ENCODE measurements at regions of chr9 and their contacts with region 1.

Region 1: GRCh38 chr9:114906908-114907571 is 23.4 kb downstream of the TNFSF8 start:
- DNase-seq: no peak
- H3K4me3 ChIP-seq: no peak overlapping the region
- H3K27ac ChIP-seq: no peak overlapping the region; the same call in 1 of the 2 replicates
- H3K4me1 ChIP-seq: peaks cover 26% of the 10 kb centered on the region
- H3K27me3 ChIP-seq: peaks cover 11% of the 10 kb centered on the region
- CTCF ChIP-seq: peak; percentile 68

Region 2: GRCh38 chr9:114405294-114406034 is 501.6 kb before region 1 on chr9:
- CTCF ChIA-PET with region 1: interaction called, 4 read pairs
- POLR2A ChIA-PET with region 1: no interaction called
- intact Hi-C with region 1: loop called (anchors 2 kb)
- DNase-seq: peak; percentile 59 to 76
- H3K4me3 ChIP-seq: no peak overlapping the region
- H3K27ac ChIP-seq: no peak overlapping the region
- H3K4me1 ChIP-seq: no peaks in the 10 kb centered on the region
- H3K27me3 ChIP-seq: no peaks in the 10 kb centered on the region
- CTCF ChIP-seq: peak; percentile 82

Region 3: DNA sequence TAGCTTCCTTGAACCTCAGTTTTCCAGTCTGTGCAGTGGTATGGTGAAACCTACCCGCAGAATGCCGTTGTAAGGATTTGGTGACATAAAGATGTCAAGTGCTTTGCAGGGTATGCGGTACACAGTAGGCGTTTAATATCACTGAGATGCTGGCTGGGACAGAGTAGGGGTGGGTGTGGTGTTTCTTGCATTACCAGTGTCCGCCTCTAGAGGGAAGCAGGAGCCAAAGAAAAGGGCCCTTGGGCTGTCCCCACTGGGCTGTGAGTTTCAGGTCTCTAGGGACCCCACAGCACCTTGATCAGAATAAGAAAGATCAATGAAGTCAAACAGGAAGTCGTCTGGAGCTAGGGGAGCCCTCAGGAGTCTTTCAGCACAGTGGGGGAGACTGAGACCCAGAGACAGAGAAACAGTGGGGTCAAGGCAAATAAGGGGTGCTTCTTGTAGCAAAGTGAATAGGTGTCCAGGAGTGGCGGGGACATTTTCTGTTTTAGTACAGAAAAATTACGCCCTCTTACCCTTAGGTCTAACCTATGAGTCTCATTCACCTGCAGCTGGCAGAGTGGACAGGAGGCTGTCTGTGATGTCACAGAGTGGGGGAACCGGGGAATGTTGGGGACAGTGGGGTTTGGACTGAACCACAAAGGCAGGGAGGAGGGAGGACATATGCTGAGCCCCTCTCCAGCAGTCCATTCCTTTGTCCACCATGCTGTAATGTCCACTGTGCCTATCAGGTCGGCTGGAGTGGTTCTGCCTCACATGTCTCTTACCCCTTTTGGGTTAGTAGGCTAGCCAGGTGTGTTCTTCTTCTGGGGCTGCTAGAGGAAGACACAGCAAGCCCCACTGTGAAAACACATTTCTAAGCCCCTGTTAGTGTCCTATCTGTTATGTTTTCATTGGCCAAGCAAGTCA is 244.7 kb before region 1 on chr9:
- CTCF ChIA-PET with region 1: no interaction called
- POLR2A ChIA-PET with region 1: no interaction called
- intact Hi-C with region 1: loop called (anchors 1 kb)
- DNase-seq: peak in 1 of 2 experiments; percentile 58
- H3K4me3 ChIP-seq: no peak overlapping the region
- H3K27ac ChIP-seq: no peak overlapping the region
- H3K4me1 ChIP-seq: no peaks in the 10 kb centered on the region
- H3K27me3 ChIP-seq: no peaks in the 10 kb centered on the region
- CTCF ChIP-seq: peak; percentile 96

Region 4: DNA sequence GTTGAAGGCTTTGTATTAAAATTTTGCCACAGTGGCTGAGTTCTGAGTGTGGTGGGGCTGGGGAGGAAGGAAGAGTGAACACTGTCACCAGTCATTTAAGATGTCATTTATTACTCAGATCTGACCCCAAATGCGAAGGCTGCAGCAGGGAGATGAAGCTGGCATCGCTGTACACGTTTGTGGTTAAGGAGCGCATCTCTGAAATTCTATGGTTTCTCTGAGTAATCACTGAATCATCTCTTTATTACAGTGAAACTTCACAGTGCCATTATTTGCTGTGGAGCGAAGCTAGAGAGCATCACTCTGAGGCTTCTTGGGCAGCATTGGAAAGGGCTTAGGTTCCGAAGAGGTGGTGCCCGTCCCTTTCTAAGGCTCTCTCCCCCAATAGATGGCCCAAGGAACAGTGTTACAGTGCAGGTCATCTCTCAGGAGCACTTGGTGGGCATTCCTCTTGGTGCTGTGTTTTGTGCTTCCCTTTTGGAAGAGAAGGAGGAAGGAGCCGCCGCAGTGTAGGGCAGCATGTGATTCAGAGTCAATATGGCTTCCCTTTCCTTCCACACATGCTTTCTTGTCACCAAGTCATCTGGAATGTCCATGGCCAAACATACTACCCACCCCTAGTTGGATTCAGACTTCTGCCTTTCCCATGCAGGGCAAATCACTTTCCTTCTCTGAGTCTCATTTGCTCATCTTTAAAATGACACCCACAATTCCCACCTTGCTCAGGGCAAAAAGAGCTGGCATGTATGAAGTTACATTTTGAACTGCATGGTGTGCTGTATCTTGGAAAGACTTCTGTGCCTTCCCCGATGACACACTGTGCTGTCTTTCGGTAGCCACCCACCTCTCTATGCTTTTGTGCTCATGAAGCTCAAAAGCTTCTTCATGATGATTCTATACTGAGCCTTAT is 215.7 kb before region 1 on chr9:
- CTCF ChIA-PET with region 1: interaction called, 3 read pairs
- POLR2A ChIA-PET with region 1: no interaction called
- intact Hi-C with region 1: loop called (anchors 1 kb)
- DNase-seq: peak; percentile 69 to 95
- H3K4me3 ChIP-seq: no peak overlapping the region
- H3K27ac ChIP-seq: peak overlapping the region; percentile 79
- H3K4me1 ChIP-seq: peaks cover 35% of the 10 kb centered on the region
- H3K27me3 ChIP-seq: no peaks in the 10 kb centered on the region
- CTCF ChIP-seq: no peak

Region 5: GRCh38 chr9:114738581-114739316 is 168.3 kb before region 1 on chr9:
- CTCF ChIA-PET with region 1: interaction called, 5 read pairs
- POLR2A ChIA-PET with region 1: no interaction called
- intact Hi-C with region 1: loop called (anchors 1 kb)
- DNase-seq: peak; percentile 68 to 69
- H3K4me3 ChIP-seq: no peak overlapping the region
- H3K27ac ChIP-seq: no peak overlapping the region
- H3K4me1 ChIP-seq: peaks cover 19% of the 10 kb centered on the region
- H3K27me3 ChIP-seq: no peaks in the 10 kb centered on the region
- CTCF ChIP-seq: peak; percentile 92

Region 6: GRCh38 chr9:114779352-114779845 is 127.6 kb before region 1 on chr9:
- CTCF ChIA-PET with region 1: no interaction called
- POLR2A ChIA-PET with region 1: no interaction called
- intact Hi-C with region 1: no loop called
- DNase-seq: peak; percentile 85 to 94
- H3K4me3 ChIP-seq: no peak overlapping the region
- H3K27ac ChIP-seq: no peak overlapping the region
- H3K4me1 ChIP-seq: peaks cover 19% of the 10 kb centered on the region
- H3K27me3 ChIP-seq: 0 out of 2 replicates have a peak, but pooled peaks cover 10% of the 10 kb centered on the region
- CTCF ChIP-seq: no peak

Region 7: DNA sequence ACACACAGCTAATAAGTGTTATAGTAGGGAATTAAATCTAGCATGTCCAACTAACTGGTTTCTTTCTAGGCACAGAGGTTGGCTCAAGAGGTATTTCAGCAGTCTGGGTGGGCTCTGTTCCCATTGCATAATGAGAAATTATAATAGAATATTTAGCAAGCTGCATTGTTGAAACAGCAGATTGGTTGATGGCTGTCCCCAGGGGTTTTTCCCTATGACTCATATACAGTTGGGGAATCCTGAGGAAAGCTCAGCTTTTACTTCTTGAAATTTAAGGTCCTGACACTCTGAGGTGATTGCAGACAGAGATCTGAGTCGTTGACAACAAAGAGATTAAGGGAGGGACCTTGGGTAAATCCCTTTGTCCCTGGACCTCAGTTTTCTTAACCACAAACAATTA is 61.6 kb after region 1 on chr9:
- CTCF ChIA-PET with region 1: no interaction called
- POLR2A ChIA-PET with region 1: no interaction called
- intact Hi-C with region 1: no loop called
- DNase-seq: no peak
- H3K4me3 ChIP-seq: no peak overlapping the region
- H3K27ac ChIP-seq: no peak overlapping the region
- H3K4me1 ChIP-seq: no peaks in the 10 kb centered on the region
- H3K27me3 ChIP-seq: peaks cover 4% of the 10 kb centered on the region; the same call in 1 of the 2 replicates
- CTCF ChIP-seq: no peak

Region 8: DNA sequence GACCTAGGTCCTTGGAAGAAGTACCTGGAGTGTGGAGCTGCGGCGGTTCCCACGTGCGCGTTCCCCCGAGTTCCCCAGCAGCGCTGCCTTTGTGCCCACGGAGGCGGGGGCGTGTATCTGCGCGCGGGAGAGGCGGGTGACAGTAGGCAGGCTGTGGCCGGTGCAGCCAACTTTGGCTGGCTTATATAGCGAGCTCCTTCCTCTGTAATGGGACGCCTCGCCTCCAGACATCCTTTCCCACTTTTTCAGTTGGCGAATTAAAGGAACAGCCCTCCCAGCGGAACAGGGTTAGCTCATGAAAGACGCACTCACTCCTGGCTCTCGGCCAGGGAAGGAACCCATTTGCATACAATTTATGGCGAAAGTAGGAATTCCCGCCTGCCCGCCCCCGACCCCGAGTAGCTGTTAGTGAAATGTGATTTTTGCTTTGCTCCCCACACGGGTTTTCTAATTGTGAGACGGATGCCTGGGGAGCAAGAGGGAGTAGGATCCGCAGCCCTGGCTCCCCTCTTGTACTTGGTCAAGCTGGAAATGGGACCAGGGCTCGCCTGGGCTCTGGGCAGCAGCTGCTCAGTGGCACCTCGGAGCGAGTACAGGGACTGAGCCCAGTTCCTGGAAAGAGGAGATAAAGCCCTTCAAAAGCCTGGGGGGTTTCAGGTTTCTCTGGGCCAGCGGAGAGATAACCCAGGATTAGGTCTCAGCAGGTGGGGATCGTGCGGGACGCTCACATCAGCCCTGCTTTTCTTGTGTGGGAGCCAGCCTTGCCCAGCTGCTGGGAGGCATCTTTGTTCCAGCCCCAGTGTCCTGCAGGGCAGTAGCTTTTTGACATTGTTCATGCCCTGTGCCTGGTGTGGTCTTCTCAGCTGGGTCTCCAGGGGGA is 211.2 kb after region 1 on chr9 and contains the start of gene TNC:
- CTCF ChIA-PET with region 1: no interaction called
- POLR2A ChIA-PET with region 1: no interaction called
- intact Hi-C with region 1: loop called (anchors 1 kb)
- DNase-seq: peak in 1 of 2 experiments; percentile 55
- H3K4me3 ChIP-seq: peak within 1 kb of the TSS; percentile 48; the same call in 1 of the 2 replicates
- H3K27ac ChIP-seq: peak within 1 kb of the TSS; percentile 17; the same call in 1 of the 2 replicates
- H3K4me1 ChIP-seq: peaks cover 64% of the 10 kb centered on the region
- H3K27me3 ChIP-seq: peaks cover 1% of the 10 kb centered on the region; the same call in 1 of the 2 replicates
- CTCF ChIP-seq: no peak
- total RNA-seq, gene TNC: 1.1 and 1.9 TPM in 2 replicates

Region 9: DNA sequence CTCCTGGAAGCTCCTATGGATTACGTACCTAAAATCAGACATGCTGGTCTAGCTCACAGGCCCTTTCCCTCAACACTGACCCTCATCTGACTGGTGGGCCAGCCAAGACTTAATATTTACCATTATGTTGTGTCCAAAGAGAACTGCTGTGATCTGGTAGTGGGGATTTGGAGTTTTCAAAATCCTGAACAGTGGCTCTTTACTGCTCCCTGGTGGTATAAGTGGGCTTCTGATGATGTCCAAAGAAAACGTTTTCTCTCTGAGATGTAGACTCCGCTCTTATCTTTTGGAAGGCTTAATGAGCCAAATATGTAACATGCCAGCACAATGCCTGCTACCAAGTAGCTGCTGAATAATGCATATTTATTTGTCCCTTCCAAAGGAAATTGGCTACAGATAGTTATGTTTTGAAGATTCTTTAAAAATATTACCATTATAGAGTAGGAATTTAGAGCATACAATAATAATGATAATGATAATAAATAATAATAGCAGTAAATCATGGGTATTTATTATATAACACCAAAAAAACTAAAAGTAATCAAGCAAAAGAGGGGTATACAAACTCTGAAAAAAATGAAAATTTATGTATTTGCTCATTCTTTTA is 617.5 kb after region 1 on chr9:
- CTCF ChIA-PET with region 1: no interaction called
- POLR2A ChIA-PET with region 1: no interaction called
- intact Hi-C with region 1: loop called (anchors 5 kb)
- DNase-seq: peak; percentile 30 to 60
- H3K4me3 ChIP-seq: no peak overlapping the region
- H3K27ac ChIP-seq: no peak overlapping the region
- H3K4me1 ChIP-seq: no peaks in the 10 kb centered on the region
- H3K27me3 ChIP-seq: no peaks in the 10 kb centered on the region
- CTCF ChIP-seq: peak; percentile 84